ENCODE measurements at regions of chr4 and their contacts with region 1.

Region 1: DNA sequence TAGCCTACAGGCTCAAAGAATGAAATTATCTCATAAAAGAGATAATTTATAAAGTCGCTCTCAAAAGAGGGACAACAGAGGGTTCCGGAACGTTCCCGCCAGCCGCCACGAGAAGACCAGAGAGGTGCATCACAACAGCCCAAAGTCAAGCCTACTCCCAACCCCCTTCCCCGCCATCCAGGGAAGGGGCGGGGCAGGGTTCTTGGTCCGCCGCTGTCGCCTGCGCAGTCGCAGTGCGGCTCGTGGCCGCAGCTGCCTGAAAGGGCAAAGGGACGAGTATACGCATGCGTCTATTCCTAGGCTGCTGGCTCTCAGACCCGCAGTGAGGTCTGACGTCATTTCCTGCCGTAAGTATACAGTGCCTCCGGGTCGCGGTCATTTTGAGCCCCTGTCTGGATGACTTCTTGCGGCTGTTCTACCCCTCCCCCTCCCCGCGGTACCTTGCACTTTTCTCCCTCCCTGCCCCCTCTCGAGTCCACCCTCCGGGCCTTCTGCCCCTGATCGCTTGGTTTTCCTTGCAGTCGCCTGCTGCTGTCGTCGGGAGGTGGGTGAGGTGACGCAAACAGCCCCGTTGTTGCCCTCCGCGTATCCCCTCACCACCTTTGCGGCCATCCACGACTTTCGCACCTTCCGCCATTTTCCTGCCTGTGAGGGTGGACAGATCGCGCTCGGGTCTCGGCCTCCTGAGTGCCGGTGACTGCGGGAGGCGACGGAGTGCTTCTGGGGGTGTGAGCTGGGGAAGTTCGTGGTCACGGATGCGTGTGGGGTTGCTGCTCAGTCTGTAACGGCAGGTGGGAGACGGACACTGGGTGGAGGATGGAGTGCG is at the start of gene OCIAD1:
- DNase-seq: peak; percentile 94 to 97
- ATAC-seq: peak; percentile 99 to 100 (median 100)
- H3K4me3 ChIP-seq: peak within 1 kb of the TSS; percentile 99
- H3K27ac ChIP-seq: peak within 1 kb of the TSS; percentile 99
- H3K4me1 ChIP-seq: peaks cover 11% of the 10 kb centered on the region
- H3K27me3 ChIP-seq: no peaks in the 10 kb centered on the region
- CTCF ChIP-seq: no peak
- total RNA-seq, gene OCIAD1: 118 to 160 (median 136) TPM

Region 2: GRCh38 chr4:48635310-48635709 is 195.6 kb before region 1 on chr4:
- intact Hi-C with region 1: loop called in 1 of 2 experiments (anchors 10 kb)
- DNase-seq: no peak
- ATAC-seq: peak; percentile 46 to 62 (median 56)
- H3K4me3 ChIP-seq: no peak overlapping the region
- H3K27ac ChIP-seq: no peak overlapping the region
- H3K4me1 ChIP-seq: peaks cover 24% of the 10 kb centered on the region
- H3K27me3 ChIP-seq: no peaks in the 10 kb centered on the region
- CTCF ChIP-seq: no peak

Region 3: DNA sequence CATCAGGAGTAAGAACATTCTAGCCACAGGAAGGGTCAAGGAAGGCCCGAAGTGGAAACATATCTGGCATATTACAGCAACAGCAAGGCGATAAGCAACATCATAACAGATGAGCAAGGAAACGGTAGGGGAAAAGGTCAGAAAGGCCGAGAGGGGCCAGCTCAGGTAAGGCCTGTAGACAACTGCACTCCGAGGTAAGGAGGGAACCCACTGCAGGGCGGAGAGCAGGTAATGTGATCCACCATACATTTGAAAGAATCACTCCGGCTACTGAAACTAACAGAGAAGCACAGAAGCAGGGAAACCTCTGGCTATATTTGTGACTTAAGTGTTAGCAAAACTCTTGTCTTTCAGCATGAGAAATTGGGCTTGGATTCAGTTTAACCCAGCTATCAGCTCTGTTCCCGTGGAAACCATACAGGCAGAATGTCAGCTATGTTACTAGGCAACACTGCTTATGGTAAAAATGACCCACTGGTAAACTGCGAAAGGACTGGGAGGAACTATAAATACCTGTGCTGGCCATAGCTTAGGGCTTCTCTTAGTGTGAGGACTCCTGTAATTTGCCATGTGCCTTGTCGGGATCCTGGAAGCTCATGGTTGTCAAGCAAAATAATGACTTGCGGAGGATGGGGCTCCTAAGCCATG is 81.8 kb before region 1 on chr4:
- intact Hi-C with region 1: no loop called
- DNase-seq: no peak
- ATAC-seq: peak in 2 of 4 donors; percentile 20 to 30
- H3K4me3 ChIP-seq: no peak overlapping the region
- H3K27ac ChIP-seq: no peak overlapping the region
- H3K4me1 ChIP-seq: peaks cover 42% of the 10 kb centered on the region
- H3K27me3 ChIP-seq: no peaks in the 10 kb centered on the region
- CTCF ChIP-seq: no peak

Measured in psoas muscle (tissue), 8 donors.